Activated CD8-positive, alpha-beta memory T cell treated with anti-CD3 and anti-CD28 coated beads, Interleukin-2, amount 10 ng/mL, durations not matched to agents 7 days and 5 days (primary cell): ENCODE measurements at regions of chr14 and their contacts with region 1.

Region 1: GRCh38 chr14:94021001-94021400 is 5.1 kb upstream of the OTUB2 start:
- DNase-seq: no peak
- ATAC-seq: no peak
- H3K4me3 Mint-ChIP-seq: no peak overlapping the region
- H3K27ac Mint-ChIP-seq: peak overlapping the region; percentile 76
- H3K4me1 Mint-ChIP-seq: peaks cover 42% of the 10 kb centered on the region
- H3K27me3 Mint-ChIP-seq: peaks cover 8% of the 10 kb centered on the region

Region 2: GRCh38 chr14:94009767-94010166 is 11.2 kb before region 1 on chr14:
- CTCF ChIA-PET with region 1: interaction called, 25 read pairs
- DNase-seq: no peak
- ATAC-seq: no peak
- H3K4me3 Mint-ChIP-seq: no peak overlapping the region
- H3K27ac Mint-ChIP-seq: peak overlapping the region; percentile 79
- H3K4me1 Mint-ChIP-seq: peaks cover 57% of the 10 kb centered on the region
- H3K27me3 Mint-ChIP-seq: no peaks in the 10 kb centered on the region

Region 3: GRCh38 chr14:94088516-94088915 is 67.5 kb after region 1 on chr14:
- CTCF ChIA-PET with region 1: no interaction called
- DNase-seq: no peak
- ATAC-seq: no peak
- H3K4me3 Mint-ChIP-seq: no peak overlapping the region
- H3K27ac Mint-ChIP-seq: no peak overlapping the region
- H3K4me1 Mint-ChIP-seq: peaks cover 2% of the 10 kb centered on the region
- H3K27me3 Mint-ChIP-seq: no peaks in the 10 kb centered on the region